Calu3 (cell line): ENCODE measurements at regions of chr3 and their contacts with region 1.

Region 1: DNA sequence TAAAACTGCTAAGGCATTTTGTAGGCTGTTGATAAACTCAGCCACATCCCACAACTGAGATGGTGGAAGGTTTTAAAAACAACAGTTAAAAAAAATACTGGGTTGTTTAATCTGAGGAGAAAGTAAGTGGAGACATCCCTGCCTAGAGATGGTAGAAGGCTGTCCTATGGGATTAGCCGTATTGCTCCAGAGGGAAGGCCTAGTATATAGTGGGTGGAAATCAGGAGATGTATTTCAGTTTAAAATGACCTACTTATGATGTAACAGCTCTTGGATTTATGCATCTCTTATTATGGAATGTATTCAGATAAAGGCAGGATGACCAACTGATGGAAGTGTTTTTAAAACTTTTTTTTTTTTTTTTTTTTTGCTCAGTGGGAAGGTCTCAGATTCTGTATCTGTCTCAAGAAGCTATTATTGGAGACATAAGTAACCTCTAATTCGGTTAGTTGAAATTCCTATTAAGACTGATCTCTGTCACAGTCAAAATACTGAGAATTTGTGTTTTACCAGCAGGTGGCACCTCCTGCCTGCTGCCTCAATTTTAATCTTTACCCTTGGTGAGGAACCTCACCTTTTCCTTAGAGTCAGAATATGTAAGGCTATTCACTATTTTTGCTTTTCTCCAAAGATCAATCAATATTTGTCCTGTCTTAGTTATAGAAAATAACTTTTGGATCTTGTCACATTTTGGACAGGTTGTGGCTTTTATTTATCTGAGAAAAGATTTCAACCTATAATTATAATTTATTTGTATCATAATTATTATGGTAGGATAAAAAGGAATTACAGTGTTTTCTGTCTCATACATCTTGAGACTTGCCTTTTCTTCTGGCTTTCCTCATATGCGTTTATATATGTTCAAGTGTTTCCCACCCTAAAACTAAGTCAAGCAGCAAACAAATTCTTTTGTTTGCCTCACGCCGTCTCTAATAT is 63.0 kb downstream of the VPS8 start:
- DNase-seq: peak; percentile 54
- H3K4me3 Mint-ChIP-seq: no peak overlapping the region
- H3K27ac Mint-ChIP-seq: no peak overlapping the region
- H3K4me1 Mint-ChIP-seq: no peaks in the 10 kb centered on the region
- H3K27me3 Mint-ChIP-seq: no peaks in the 10 kb centered on the region
- CTCF ChIP-seq: peak; percentile 60

Region 2: GRCh38 chr3:184842433-184842832 is 32.5 kb before region 1 on chr3:
- CTCF ChIA-PET with region 1: interaction called, 12 read pairs
- intact Hi-C with region 1: no loop called
- DNase-seq: no peak
- H3K4me3 Mint-ChIP-seq: no peak overlapping the region
- H3K27ac Mint-ChIP-seq: no peak overlapping the region
- H3K4me1 Mint-ChIP-seq: peaks cover 9% of the 10 kb centered on the region
- H3K27me3 Mint-ChIP-seq: no peaks in the 10 kb centered on the region
- CTCF ChIP-seq: no peak

Region 3: GRCh38 chr3:185176750-185177359 is 301.9 kb after region 1 on chr3:
- CTCF ChIA-PET with region 1: interaction called, 7 read pairs
- intact Hi-C with region 1: loop called (anchors 1 kb)
- DNase-seq: peak; percentile 66
- H3K4me3 Mint-ChIP-seq: no peak overlapping the region
- H3K27ac Mint-ChIP-seq: no peak overlapping the region
- H3K4me1 Mint-ChIP-seq: peaks cover 16% of the 10 kb centered on the region
- H3K27me3 Mint-ChIP-seq: no peaks in the 10 kb centered on the region
- CTCF ChIP-seq: peak; percentile 89

Region 4: DNA sequence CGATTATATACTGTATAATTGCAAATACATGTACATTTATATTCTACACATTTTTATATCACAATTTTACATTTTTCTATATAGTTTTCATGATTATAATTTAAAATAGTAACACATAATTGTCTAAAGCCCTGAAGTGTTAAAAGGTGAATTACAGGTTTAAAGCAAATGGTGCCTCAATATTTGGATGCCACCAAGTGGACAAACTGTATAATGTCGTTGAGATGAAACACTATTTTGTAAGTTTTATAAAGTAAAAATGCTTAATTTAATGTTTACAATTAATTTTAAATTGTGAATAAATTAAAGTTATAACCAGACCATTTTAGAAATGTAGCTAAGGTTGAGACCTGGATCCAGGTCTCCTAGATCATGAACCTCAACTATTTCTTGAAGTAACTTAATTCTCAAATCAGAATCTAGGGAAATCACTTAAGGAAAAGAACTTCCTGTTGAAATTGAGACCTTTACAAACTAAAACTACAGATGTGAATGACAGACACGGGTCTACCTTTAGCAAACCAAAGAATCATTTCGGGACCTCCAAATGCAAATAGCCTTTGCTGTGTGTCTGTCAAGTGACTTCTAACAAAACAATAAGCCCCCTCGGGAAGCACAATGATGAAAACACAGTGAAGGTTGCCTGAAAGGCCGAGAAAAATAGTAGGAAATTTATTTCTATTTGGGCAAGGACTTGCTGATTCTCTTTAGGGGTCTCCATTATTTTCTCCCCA is 341.1 kb after region 1 on chr3:
- CTCF ChIA-PET with region 1: interaction called, 4 read pairs
- intact Hi-C with region 1: loop called (anchors 5 kb)
- DNase-seq: no peak
- H3K4me3 Mint-ChIP-seq: no peak overlapping the region
- H3K27ac Mint-ChIP-seq: peak overlapping the region; percentile 17
- H3K4me1 Mint-ChIP-seq: no peaks in the 10 kb centered on the region
- H3K27me3 Mint-ChIP-seq: no peaks in the 10 kb centered on the region
- CTCF ChIP-seq: peak; percentile 57

Region 5: DNA sequence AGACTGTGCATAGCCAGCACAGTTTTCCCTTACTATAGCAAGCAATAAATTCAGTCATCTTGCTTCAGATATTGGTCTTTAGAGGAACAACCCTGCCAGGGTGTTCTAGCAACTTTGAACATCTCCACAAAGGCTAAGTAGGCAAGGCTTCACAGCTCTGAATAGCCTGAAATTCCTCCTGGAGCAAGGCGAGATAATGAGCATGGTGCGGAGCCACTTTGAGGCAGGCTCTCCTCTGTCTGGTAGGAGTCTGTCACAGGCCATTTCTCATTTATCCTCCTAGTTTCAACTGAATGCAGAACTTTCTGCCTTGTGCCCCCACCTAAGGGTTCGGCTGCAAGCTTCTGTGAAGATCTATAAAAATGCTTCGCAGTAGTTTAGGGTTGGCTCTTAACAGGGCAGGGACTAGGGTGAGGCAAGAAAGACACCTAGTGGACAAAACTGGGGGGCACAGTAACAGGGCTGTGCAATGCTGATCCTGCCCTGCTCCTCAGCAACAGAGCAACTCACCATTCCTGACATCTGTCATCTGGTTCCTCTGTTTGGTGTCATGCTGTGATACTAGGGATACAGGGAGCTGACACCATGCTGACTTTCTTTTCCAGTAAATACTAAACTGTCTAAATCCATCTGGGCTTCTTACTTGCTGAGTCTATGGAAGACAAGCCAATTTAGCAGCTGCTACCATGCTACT is 395.4 kb after region 1 on chr3:
- CTCF ChIA-PET with region 1: interaction called, 6 read pairs
- intact Hi-C with region 1: loop called (anchors 1 kb)
- DNase-seq: peak; percentile 69
- H3K4me3 Mint-ChIP-seq: no peak overlapping the region
- H3K27ac Mint-ChIP-seq: no peak overlapping the region
- H3K4me1 Mint-ChIP-seq: peaks cover 18% of the 10 kb centered on the region
- H3K27me3 Mint-ChIP-seq: peaks cover 8% of the 10 kb centered on the region
- CTCF ChIP-seq: peak; percentile 79